IMR-90 (cell line): ENCODE measurements at regions of chr11 and their contacts with region 1.

Region 1: DNA sequence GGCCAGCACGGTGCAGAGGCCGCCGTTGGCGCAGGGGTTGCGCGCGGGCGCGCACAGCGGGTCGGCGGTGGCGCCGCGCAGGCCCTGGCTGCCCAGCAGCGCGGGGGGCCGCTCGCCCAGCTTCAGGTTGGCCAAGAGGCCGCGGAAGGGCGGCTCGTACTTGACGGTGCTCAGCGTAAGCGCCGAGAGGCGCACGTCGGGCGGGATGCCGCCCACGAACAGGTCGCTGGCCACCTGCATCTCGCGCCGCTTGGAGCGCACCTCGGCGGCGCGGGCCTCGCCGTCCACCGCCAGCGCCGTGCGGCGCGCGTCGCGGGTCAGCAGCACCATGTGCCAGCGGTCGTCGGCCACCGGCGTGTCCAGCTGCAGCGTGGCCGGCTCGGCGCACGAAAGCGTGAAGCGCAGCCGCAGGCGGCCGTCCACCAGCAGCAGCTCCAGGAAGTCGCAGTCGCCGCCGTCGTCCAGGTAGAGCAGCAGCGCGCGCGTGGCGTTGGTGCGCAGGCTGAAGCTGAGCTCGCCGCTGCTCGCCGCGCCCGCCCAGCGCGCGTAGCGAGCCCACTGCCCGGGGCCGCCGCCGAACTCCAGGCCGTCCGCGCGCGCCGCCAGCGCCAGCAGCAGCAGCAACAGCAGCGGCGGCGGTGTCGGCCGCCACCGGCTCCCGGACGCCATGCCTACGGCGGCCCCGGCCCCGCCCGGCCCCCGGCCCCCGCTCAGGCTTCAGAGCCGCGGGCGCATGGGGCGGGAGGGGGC is 9.8 kb downstream of the NRXN2 start:
- DNase-seq: peak; percentile 37
- ATAC-seq: peak; percentile 62
- H3K4me3 ChIP-seq: no peak overlapping the region
- H3K27ac ChIP-seq: no peak overlapping the region
- H3K4me1 ChIP-seq: no peaks in the 10 kb centered on the region; the same call in 1 of the 2 replicates
- H3K27me3 ChIP-seq: peaks cover 78% of the 10 kb centered on the region
- CTCF ChIP-seq: no peak
- POLR2A ChIP-seq: no peak
- RAD21 ChIP-seq: no peak

Region 2: DNA sequence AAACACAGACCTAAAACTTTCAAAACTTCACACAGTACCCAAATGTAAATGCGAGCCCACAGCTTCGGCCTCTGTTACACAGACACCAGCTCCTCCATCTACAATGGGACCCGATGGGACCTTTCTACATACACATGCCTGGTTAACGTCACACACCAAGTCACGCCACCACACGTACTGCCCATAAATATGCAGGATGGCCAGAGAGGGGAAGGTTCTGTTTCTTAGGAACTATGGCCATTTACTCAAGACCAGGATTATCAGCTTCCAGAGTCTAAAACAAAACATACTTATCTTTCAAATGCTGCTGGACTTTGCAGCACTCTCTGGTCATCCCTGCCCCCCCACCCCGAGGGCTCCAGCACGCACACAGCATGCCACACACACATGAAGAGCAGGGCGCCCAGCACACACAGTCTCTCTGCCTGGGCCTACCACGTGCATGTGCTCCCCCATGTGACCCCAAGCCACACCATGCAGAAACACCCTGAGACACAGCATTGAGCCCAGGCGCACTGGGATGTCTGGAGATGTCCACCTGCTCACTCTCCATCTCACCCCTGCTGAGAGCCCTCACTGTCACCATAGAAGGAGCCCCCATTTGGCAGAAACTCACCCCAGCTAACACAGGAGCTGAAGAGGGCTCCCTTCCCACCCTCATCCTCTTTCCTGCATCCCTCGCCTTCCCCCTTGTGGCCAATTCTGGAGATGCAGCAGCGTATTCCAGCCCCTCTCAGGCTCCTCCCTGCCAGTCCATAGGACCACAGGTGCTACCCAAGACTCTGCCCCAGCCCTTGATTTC is 60.4 kb before region 1 on chr11:
- CTCF ChIA-PET with region 1: no interaction called
- POLR2A ChIA-PET with region 1: no interaction called
- dilution Hi-C with region 1: no loop called
- in situ Hi-C with region 1: no loop called
- intact Hi-C with region 1: no loop called
- DNase-seq: peak; percentile 55
- ATAC-seq: peak; percentile 97
- H3K4me3 ChIP-seq: no peak overlapping the region
- H3K27ac ChIP-seq: no peak overlapping the region
- H3K4me1 ChIP-seq: no peaks in the 10 kb centered on the region
- H3K27me3 ChIP-seq: peaks cover 41% of the 10 kb centered on the region
- CTCF ChIP-seq: peak; percentile 93
- POLR2A ChIP-seq: no peak
- RAD21 ChIP-seq: peak; percentile 86

Region 3: DNA sequence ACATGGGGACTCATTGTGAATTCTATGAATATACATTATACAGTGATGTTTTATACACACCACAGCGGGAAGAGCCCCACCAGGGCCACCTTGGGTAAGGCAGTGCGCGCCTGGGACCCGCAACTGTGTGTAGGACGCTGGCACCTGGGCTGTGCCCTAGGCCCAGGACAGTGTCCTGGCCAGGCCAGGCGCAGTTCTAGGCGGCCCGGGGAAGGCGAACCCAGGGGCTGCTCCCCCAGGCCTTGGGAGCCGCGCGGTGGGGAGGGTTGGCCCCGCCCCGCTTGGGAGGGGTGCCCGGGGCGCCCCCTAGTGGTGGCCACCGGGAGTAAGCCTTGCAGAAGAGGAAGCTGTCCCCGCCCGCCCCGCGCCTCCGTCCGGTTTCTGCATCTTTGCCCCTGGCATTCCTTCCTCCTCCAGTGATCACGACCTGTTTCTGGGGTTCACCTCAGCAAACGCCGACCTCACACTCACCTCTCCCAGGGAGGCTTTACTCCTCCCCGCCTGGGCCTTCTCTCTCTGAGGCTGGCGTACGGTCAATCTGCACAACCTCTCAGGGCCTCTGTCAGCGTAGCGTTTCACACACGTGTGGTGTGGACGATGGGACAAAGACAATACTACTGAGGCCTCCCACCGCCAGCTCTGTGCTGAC is 174.7 kb after region 1 on chr11:
- CTCF ChIA-PET with region 1: no interaction called
- POLR2A ChIA-PET with region 1: no interaction called
- dilution Hi-C with region 1: no loop called
- in situ Hi-C with region 1: no loop called
- intact Hi-C with region 1: no loop called
- DNase-seq: no peak
- ATAC-seq: peak; percentile 84
- H3K4me3 ChIP-seq: no peak overlapping the region
- H3K27ac ChIP-seq: peak overlapping the region; percentile 30; the same call in 1 of the 2 replicates
- H3K4me1 ChIP-seq: peaks cover 10% of the 10 kb centered on the region
- H3K27me3 ChIP-seq: no peaks in the 10 kb centered on the region
- CTCF ChIP-seq: peak; percentile 76
- POLR2A ChIP-seq: no peak
- RAD21 ChIP-seq: peak; percentile 41

Region 4: DNA sequence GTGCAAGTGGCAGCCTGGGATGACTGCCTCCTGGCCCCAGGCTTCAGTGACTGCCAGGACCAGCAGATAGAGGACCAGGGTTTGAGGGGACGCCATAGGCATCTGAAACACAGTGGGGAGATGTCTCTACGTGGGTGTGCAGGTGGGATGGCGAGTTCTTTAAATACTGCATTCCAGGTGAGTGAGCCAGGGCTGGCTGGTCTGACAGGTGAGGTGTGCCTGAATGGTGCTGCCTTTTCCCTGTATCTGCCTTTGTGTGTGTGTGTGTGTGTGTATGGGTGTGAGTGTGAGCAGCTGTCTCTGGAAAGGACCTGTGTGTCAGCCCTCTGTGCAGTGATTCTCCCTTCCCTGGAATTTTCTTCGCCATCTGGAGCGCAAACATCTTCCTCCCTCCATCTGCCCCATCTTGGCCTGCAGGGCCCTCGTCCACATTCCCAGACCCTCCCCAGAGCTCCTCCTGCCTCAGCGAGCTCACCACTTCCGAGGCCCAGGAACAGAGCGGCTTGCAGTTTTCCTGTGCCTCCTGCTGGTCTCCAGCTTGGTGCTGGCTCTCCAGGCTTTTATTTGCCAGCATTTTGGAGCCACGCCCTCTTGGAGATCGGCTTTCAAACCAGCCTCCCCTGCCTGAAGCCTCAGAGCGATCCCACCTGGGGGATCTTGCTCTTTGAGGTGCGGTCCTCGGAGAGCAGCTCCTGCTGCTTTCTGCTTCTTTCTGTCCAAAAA is 222.3 kb after region 1 on chr11 and contains the start of gene GPHA2:
- CTCF ChIA-PET with region 1: no interaction called
- POLR2A ChIA-PET with region 1: no interaction called
- dilution Hi-C with region 1: no loop called
- in situ Hi-C with region 1: no loop called
- intact Hi-C with region 1: loop called (anchors 5 kb)
- DNase-seq: no peak
- ATAC-seq: peak; percentile 65
- H3K4me3 ChIP-seq: no peak within 1 kb of the TSS
- H3K27ac ChIP-seq: no peak within 1 kb of the TSS
- H3K4me1 ChIP-seq: no peaks in the 10 kb centered on the region
- H3K27me3 ChIP-seq: peaks cover 10% of the 10 kb centered on the region
- CTCF ChIP-seq: no peak
- POLR2A ChIP-seq: no peak
- RAD21 ChIP-seq: no peak
- total RNA-seq, gene GPHA2: not detected in 2 replicates